Breast epithelium (tissue), 4 donors: ENCODE measurements at regions of chr2 and their contacts with region 1.

Region 1: GRCh38 chr2:164917296-164917903 is 37.9 kb downstream of the SLC38A11 start:
- DNase-seq: peak in 1 of 2 donors; percentile 58
- H3K4me3 ChIP-seq: no peak overlapping the region
- H3K27ac ChIP-seq: no peak overlapping the region
- H3K4me1 ChIP-seq: no peaks in the 10 kb centered on the region
- H3K27me3 ChIP-seq: no peaks in the 10 kb centered on the region
- CTCF ChIP-seq: peak; percentile 15 to 70 (median 41)
- POLR2A ChIP-seq: no peak

Region 2: GRCh38 chr2:164464376-164464775 is 453.0 kb before region 1 on chr2:
- intact Hi-C with region 1: no loop called
- DNase-seq: no peak
- H3K4me3 ChIP-seq: no peak overlapping the region
- H3K27ac ChIP-seq: no peak overlapping the region
- H3K4me1 ChIP-seq: no peaks in the 10 kb centered on the region
- H3K27me3 ChIP-seq: no peaks in the 10 kb centered on the region
- CTCF ChIP-seq: no peak
- POLR2A ChIP-seq: no peak

Region 3: GRCh38 chr2:164737612-164738081 is 179.8 kb before region 1 on chr2:
- intact Hi-C with region 1: loop called (anchors 10 kb)
- DNase-seq: peak in 1 of 2 donors; percentile 55
- H3K4me3 ChIP-seq: no peak overlapping the region
- H3K27ac ChIP-seq: no peak overlapping the region
- H3K4me1 ChIP-seq: no peaks in the 10 kb centered on the region
- H3K27me3 ChIP-seq: no peaks in the 10 kb centered on the region
- CTCF ChIP-seq: peak; percentile 55 to 85 (median 66)
- POLR2A ChIP-seq: no peak

Region 4: DNA sequence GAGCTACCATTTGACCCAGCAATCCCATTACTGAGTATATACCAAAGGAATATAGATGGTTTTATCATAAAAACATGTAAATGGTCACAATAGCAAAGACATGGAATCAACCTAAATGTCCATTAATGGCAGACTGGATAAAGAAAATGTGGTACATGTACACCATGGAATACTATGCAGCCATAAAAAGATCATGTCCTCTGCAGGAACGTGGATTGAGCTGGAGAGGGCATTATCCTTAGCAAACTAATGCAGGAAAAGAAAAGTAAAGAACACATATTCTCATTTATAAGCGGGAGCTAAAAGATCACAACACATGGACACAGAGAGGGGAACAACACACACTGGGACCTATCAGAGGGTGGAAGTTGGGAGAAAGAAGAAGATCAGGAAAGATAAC is 15.0 kb after region 1 on chr2:
- intact Hi-C with region 1: loop called (anchors 1 kb)
- DNase-seq: no peak
- H3K4me3 ChIP-seq: no peak overlapping the region
- H3K27ac ChIP-seq: no peak overlapping the region
- H3K4me1 ChIP-seq: no peaks in the 10 kb centered on the region
- H3K27me3 ChIP-seq: no peaks in the 10 kb centered on the region
- CTCF ChIP-seq: no peak
- POLR2A ChIP-seq: no peak

Region 5: GRCh38 chr2:164992818-164993217 is 75.4 kb after region 1 on chr2:
- intact Hi-C with region 1: no loop called
- DNase-seq: peak in 1 of 2 donors; percentile 74
- H3K4me3 ChIP-seq: no peak overlapping the region
- H3K27ac ChIP-seq: peak overlapping the region in 1 of 2 donors; percentile 57
- H3K4me1 ChIP-seq: no peaks in the 10 kb centered on the region
- H3K27me3 ChIP-seq: no peaks in the 10 kb centered on the region
- CTCF ChIP-seq: peak in 2 of 3 donors; percentile 48 to 49
- POLR2A ChIP-seq: no peak